ENCODE measurements at regions of chr11 and their contacts with region 1.

Region 1: GRCh38 chr11:12207384-12208150 is 97.2 kb downstream of the MICAL2 start:
- DNase-seq: no peak
- H3K4me3 Mint-ChIP-seq: peak overlapping the region; percentile 68
- H3K27ac Mint-ChIP-seq: peak overlapping the region; percentile 93
- H3K4me1 Mint-ChIP-seq: peaks cover 87% of the 10 kb centered on the region
- H3K27me3 Mint-ChIP-seq: no peaks in the 10 kb centered on the region

Region 2: DNA sequence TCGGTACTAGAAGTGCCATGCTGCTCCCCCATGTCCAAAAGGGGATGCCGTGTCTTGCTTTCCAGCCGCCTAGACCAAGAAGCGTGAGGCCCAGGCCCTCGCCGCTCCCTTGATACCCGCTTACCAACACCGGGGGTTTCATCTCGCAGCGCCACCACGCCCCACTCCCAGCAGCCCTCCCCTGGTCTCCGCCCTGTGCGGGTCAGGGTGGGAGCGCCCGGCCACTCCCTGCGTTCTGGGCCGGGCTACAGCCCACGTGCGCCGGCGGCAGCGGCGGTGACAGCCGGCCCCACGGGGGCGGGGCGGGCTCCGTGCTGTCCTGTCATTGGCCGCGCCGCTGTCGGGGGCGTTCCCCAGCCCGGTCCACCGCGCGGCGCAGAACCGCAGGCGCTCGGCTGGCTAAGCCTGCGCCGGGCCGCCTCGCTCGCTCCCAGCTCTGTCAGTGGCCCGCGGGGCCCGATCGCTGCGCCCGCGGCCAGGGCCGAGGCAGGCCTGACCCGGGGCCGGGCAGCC is 97.3 kb before region 1 on chr11 and contains the start of gene MICAL2:
- intact Hi-C with region 1: loop called (anchors 1 kb)
- DNase-seq: peak; percentile 90
- H3K4me3 Mint-ChIP-seq: peak within 1 kb of the TSS; percentile 90
- H3K27ac Mint-ChIP-seq: peak within 1 kb of the TSS; percentile 99
- H3K4me1 Mint-ChIP-seq: peaks cover 75% of the 10 kb centered on the region
- H3K27me3 Mint-ChIP-seq: no peaks in the 10 kb centered on the region
- total RNA-seq, gene MICAL2: 595 and 619 TPM in 2 replicates

Region 3: DNA sequence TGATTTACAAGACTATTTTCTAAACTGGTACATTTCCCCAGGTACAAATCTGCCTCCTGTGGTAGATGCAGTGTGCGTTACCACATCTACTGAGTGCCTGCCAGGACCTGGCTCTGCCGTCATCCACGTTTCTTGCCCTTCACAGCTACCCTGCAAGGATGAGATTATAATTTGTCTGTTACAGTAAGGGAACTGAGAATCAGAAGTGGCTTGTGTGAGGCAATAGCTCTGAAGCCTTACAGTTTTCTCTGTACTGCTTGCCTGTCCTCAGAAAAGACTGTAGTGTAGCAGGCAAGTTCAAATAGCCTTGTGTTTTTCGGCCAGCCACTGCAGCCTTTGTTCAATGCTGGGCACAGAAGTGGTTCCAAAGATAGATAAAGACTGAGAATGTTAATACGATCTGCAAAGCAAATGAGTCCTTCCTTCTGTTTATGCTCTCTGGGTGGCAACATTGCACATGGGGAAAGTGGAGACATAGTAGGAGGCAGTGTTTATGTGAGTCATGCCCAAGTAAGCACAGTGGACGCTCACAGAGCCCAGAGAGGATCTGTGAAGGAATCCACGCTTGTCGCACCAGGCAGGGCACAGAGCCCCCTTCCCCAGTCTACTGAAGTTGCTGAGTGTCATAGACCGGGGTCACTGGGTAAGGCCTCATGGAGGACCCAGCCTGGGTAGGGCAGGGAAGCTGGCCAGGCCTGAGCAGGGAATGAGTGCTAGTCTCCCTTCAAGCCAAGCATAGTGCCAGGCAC is 48.0 kb before region 1 on chr11:
- intact Hi-C with region 1: loop called (anchors 1 kb)
- DNase-seq: no peak
- H3K4me3 Mint-ChIP-seq: no peak overlapping the region
- H3K27ac Mint-ChIP-seq: peak overlapping the region; percentile 88
- H3K4me1 Mint-ChIP-seq: peaks cover 95% of the 10 kb centered on the region
- H3K27me3 Mint-ChIP-seq: no peaks in the 10 kb centered on the region

Region 4: DNA sequence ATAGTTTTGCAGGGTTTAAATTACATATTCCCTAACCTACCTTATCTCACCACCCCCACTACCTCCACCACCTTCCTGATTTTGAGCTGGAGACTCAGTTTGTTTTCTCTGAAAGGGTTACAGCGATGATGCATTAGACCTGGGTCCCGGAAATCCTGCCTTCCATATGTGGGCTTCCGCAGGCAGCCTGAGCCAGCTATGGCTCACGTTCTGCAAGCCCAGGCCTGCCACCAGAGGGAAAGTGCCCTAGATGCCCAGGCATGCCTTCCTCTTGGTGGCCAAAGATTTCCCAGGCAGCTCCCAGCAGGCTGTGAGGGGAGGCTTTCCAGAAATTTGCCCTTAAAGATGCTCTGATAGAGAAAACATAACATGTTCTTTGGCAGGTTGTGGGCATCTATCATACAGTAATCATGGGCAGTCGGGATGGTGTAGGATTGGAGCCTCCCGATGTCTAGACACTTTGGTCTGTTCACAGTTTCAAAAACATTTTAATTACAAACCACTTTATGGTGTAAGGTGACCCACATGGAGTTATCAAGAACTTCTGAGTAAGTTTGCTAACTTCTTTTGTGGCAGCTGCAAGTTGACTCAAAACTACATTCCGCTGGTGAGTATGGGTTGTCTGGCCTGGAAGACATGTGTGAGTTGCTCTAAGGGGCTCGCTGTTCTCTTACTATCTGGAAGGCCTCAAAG is 17.9 kb before region 1 on chr11:
- intact Hi-C with region 1: loop called (anchors 1 kb)
- DNase-seq: no peak
- H3K4me3 Mint-ChIP-seq: peak overlapping the region; percentile 48
- H3K27ac Mint-ChIP-seq: peak overlapping the region; percentile 80
- H3K4me1 Mint-ChIP-seq: peaks cover 82% of the 10 kb centered on the region
- H3K27me3 Mint-ChIP-seq: no peaks in the 10 kb centered on the region

Region 5: GRCh38 chr11:12195768-12196167 is 11.8 kb before region 1 on chr11:
- intact Hi-C with region 1: loop called (anchors 1 kb)
- DNase-seq: peak; percentile 62
- H3K4me3 Mint-ChIP-seq: peak overlapping the region; percentile 97
- H3K27ac Mint-ChIP-seq: peak overlapping the region; percentile 96
- H3K4me1 Mint-ChIP-seq: peaks cover 69% of the 10 kb centered on the region
- H3K27me3 Mint-ChIP-seq: no peaks in the 10 kb centered on the region

Region 6: DNA sequence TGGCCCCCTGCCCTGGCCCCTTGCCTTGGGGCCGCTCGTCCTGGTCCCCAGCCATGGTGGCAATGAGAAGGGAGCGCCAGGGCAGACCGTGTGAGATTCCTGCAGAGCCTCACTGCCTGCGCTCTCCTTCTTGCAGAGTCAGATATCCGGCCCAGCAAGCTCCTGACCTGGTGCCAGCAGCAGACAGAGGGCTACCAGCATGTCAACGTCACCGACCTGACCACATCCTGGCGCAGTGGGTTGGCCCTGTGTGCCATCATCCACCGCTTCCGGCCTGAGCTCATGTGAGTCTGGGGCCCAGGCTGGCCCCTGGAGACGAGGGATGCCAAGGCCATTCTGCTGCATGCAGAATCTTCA is 16.9 kb after region 1 on chr11:
- intact Hi-C with region 1: loop called (anchors 1 kb)
- DNase-seq: peak; percentile 85
- H3K4me3 Mint-ChIP-seq: peak overlapping the region; percentile 68
- H3K27ac Mint-ChIP-seq: peak overlapping the region; percentile 91
- H3K4me1 Mint-ChIP-seq: peaks cover 69% of the 10 kb centered on the region
- H3K27me3 Mint-ChIP-seq: no peaks in the 10 kb centered on the region

Measured in activated T-helper 1 cell treated with anti-CD3 and anti-CD28 coated beads, Interleukin-12 subunit alpha, Interleukin-12 subunit beta, Interleukin-2, Interleukin-4 antibody, amounts not matched to agents 30 ng/mL and 10 ng/mL and 1 ng/mL, durations not matched to agents 14 hours and 24 hours and 36 hours (primary cell).